PC-9 (cell line): ENCODE measurements at regions of chr12 and their contacts with region 1.

Region 1: GRCh38 chr12:10212201-10213131 is at the start of gene GABARAPL1:
- DNase-seq: peak; percentile 99
- H3K4me3 ChIP-seq: peak within 1 kb of the TSS; percentile 85
- H3K27ac ChIP-seq: peak within 1 kb of the TSS; percentile 90
- H3K4me1 ChIP-seq: peaks cover 20% of the 10 kb centered on the region
- H3K27me3 ChIP-seq: no peaks in the 10 kb centered on the region
- CTCF ChIP-seq: no peak
- total RNA-seq, gene GABARAPL1: 85.6 and 143 TPM in 2 replicates

Region 2: GRCh38 chr12:10033783-10034545 is 178.5 kb before region 1 on chr12:
- CTCF ChIA-PET with region 1: no interaction called
- POLR2A ChIA-PET with region 1: no interaction called
- intact Hi-C with region 1: loop called (anchors 10 kb)
- DNase-seq: no peak
- H3K4me3 ChIP-seq: no peak overlapping the region
- H3K27ac ChIP-seq: no peak overlapping the region
- H3K4me1 ChIP-seq: no peaks in the 10 kb centered on the region
- H3K27me3 ChIP-seq: no peaks in the 10 kb centered on the region
- CTCF ChIP-seq: peak; percentile 80

Region 3: GRCh38 chr12:10167588-10167987 is 44.9 kb before region 1 on chr12:
- CTCF ChIA-PET with region 1: no interaction called
- POLR2A ChIA-PET with region 1: interaction called, 11 read pairs
- intact Hi-C with region 1: loop called (anchors 5 kb)
- DNase-seq: no peak
- H3K4me3 ChIP-seq: no peak overlapping the region
- H3K27ac ChIP-seq: no peak overlapping the region
- H3K4me1 ChIP-seq: peaks cover 36% of the 10 kb centered on the region
- H3K27me3 ChIP-seq: no peaks in the 10 kb centered on the region
- CTCF ChIP-seq: no peak

Region 4: DNA sequence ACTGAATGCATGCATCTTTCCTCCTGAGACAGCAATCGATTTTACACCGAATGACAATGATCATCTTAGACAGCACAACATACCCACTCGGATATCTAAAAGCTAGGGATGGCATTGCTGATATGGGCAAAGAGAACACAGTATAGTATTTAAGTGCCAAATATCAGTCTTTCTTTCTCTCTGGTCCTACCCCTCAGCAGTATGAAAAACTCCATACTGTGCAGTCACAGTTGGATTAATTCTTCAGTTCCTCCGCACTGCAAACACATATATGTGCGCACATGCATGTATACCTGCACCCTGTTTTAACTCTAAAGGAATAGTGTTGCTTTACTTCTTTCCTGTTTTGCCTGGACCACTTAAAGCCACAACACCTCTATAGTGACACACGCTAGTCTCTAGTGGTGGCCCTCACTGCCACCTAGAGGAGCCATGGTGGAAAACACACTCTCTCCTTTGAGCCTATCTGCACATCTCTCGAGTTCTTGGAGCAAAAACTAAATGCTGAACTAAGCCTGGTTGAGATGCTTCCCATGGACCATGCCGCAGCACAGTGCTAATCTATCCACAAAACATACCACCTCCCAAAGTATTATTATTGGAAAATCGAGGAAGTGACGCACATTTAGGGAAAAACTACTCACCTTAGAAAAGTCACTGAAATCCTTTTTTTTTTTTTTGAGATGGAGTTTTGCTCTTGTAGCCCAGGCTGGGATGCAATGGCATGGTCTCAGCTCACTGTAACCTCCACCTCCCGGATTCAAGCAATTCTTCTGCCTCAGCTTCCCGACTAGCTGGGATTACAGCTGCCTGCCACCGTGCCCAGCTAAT is 21.7 kb before region 1 on chr12:
- CTCF ChIA-PET with region 1: interaction called, 3 read pairs
- POLR2A ChIA-PET with region 1: interaction called, 9 read pairs
- intact Hi-C with region 1: loop called (anchors 1 kb)
- DNase-seq: peak; percentile 59 to 67
- H3K4me3 ChIP-seq: no peak overlapping the region
- H3K27ac ChIP-seq: peak overlapping the region; percentile 79
- H3K4me1 ChIP-seq: peaks cover 40% of the 10 kb centered on the region
- H3K27me3 ChIP-seq: no peaks in the 10 kb centered on the region
- CTCF ChIP-seq: peak; percentile 74

Region 5: GRCh38 chr12:10721651-10722501 is 509.4 kb after region 1 on chr12:
- CTCF ChIA-PET with region 1: no interaction called
- POLR2A ChIA-PET with region 1: interaction called, 4 read pairs
- intact Hi-C with region 1: loop called (anchors 2 kb)
- DNase-seq: peak; percentile 93
- H3K4me3 ChIP-seq: peak overlapping the region; percentile 77
- H3K27ac ChIP-seq: peak overlapping the region; percentile 95
- H3K4me1 ChIP-seq: peaks cover 65% of the 10 kb centered on the region
- H3K27me3 ChIP-seq: no peaks in the 10 kb centered on the region
- CTCF ChIP-seq: no peak

Region 6: GRCh38 chr12:11486623-11487444 is 1274.4 kb after region 1 on chr12:
- CTCF ChIA-PET with region 1: no interaction called
- POLR2A ChIA-PET with region 1: interaction called, 22 read pairs
- intact Hi-C with region 1: no loop called
- DNase-seq: peak; percentile 66 to 71
- H3K4me3 ChIP-seq: no peak overlapping the region
- H3K27ac ChIP-seq: no peak overlapping the region
- H3K4me1 ChIP-seq: peaks cover 12% of the 10 kb centered on the region
- H3K27me3 ChIP-seq: no peaks in the 10 kb centered on the region
- CTCF ChIP-seq: peak; percentile 99

Region 7: GRCh38 chr12:11545484-11546330 is 1333.2 kb after region 1 on chr12:
- CTCF ChIA-PET with region 1: no interaction called
- POLR2A ChIA-PET with region 1: no interaction called
- intact Hi-C with region 1: no loop called
- DNase-seq: peak in 1 of 2 experiments; percentile 39
- H3K4me3 ChIP-seq: no peak overlapping the region
- H3K27ac ChIP-seq: no peak overlapping the region
- H3K4me1 ChIP-seq: peaks cover 11% of the 10 kb centered on the region; the same call in 1 of the 2 replicates
- H3K27me3 ChIP-seq: no peaks in the 10 kb centered on the region
- CTCF ChIP-seq: no peak